ENCODE measurements at regions of chr6 and their contacts with region 1.

Region 1: GRCh38 chr6:118968416-118968815 is 33.5 kb upstream of the MCM9 start:
- DNase-seq: no peak
- ATAC-seq: no peak
- H3K4me3 ChIP-seq: no peak overlapping the region
- H3K27ac ChIP-seq: no peak overlapping the region
- H3K4me1 ChIP-seq: no peaks in the 10 kb centered on the region
- H3K27me3 ChIP-seq: no peaks in the 10 kb centered on the region

Region 2: DNA sequence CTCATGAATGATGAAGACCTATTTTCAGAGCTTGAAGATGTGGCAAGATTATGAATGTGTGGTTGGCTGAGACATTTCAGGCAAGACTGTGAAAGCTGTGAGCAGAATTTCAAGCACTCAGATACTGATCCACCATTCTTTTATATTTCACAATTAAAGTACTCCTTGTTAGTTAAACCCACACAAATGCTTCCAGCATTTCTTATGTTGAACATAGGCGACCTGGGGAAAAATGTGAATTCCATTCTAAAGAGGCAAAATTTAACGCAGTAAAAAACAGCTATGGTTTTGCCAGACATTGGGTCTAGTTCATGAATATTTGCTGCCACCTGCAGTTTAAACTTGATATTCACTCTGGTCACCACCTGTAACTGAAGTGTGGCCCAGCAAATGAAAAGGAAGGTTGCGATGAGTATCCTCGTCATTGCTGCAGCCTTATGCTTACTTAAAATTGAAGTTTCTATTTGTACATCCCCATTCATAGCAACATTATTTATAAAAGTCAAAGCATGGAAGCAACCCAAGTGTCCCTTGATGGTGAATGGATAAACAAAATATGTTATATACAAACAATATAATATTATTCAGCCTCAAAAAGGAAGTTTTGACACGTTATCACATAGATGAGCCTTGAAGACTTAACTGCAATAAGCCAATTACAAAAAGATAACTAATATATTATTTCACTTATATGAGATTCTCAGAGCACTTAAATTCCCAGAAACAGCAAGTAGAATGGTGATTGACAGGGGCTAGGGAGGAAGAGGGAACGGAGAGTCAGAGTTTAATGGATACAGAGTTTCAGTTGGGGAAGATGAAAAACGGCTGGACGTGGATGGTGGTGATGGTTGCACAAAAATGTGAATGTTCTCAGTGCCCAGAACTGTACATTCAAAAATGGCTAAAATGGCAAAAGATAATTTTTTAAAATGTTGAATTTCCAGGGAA is 142.5 kb after region 1 on chr6:
- intact Hi-C with region 1: loop called (anchors 2 to 5 kb)
- DNase-seq: no peak
- ATAC-seq: peak; percentile 75
- H3K4me3 ChIP-seq: no peak overlapping the region
- H3K27ac ChIP-seq: no peak overlapping the region
- H3K4me1 ChIP-seq: no peaks in the 10 kb centered on the region
- H3K27me3 ChIP-seq: no peaks in the 10 kb centered on the region

Region 3: DNA sequence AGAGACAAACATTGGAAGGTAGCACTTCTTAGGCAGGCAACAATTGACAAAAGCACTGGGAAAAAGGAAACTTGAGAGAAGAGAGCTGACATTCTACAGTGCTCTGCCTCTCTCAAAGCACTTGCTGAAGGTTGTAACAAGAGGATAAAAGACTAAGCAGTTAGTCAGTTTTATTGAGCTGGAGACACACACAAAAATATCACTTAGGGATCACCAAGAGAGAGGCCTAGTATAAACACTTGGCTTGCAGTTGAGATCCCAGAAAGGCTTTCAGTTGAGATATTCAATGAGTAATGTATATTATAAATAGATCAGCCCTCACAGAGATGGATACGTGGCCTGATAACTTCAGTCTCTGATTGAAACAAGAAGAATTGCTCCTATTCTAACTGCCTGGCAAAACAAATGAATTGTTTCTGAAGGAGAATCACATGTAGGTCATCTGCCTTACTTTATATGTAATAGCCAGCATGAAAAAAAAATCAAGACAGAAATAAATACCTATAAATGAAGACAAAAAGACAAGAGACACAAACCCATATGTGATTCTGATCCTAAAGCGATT is 1128.4 kb after region 1 on chr6:
- intact Hi-C with region 1: no loop called
- DNase-seq: no peak
- ATAC-seq: no peak
- H3K4me3 ChIP-seq: no peak overlapping the region
- H3K27ac ChIP-seq: no peak overlapping the region
- H3K4me1 ChIP-seq: no peaks in the 10 kb centered on the region
- H3K27me3 ChIP-seq: no peaks in the 10 kb centered on the region

Measured in right cardiac atrium (tissue), 5 donors.